ENCODE measurements at regions of chr15 and their contacts with region 1.

Region 1: DNA sequence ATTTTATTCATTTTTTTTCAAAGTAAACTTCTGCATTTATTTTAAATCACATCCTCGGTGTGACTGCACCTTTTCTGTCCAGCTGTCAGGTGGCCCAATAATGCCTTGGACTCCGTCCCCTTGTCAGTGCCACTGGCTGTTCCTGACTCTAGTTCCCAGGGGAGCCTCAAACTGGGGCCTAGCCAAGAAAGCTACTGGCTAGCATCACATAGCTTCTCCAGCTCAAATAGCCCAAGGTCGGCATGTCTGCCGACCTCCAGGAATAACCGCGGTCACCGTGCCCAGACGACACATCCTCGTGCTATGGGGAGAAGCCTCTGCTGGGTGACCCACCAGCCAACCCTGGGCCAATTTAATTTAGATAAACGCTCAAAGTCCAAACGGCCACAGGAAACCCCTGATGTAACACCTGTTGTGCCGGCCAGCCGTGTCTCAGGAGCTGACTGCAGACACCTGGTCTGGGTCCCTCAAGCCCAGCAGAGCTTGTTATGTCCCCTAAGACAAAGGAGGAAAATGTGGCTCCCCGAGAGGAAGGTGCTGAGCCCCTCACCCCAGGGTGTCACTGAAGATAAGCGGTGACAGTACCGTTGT is 126.1 kb downstream of the KLF13 start:
- DNase-seq: no peak
- H3K4me3 ChIP-seq: no peak overlapping the region
- H3K27ac ChIP-seq: no peak overlapping the region
- H3K27me3 ChIP-seq: no peaks in the 10 kb centered on the region
- CTCF ChIP-seq: no peak

Region 2: DNA sequence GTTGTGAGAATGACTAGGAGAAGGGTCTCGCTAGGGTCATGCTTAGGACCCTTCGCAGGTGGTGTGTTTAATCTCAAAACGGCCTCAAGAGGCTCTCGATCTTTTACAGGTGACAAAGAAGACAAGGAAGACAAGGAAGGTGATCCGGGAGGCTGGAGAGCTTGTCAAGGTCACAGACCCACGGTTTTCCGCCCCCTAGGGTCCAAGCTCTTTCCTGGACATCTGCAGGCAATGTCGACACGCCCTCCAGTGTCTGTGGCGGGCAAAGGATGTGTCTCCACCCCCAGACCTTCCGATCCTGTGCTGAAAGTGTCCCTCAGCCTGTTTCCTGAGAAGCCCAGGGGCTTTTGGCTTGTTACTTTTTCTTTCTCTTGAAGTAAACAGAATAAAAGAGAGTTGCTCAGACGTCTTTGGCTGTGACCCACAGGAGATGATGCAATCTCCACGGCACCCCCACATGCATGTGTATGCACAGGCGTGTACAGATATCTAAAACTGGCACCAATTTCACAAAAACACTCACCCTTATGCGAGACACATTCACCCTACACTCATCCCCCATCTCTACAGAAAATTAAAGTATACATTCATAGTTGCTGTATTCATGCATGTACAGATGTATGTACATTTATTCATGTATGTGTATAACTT is 17.3 kb before region 1 on chr15:
- CTCF ChIA-PET with region 1: interaction called, 14 read pairs
- POLR2A ChIA-PET with region 1: interaction called, 7 read pairs
- DNase-seq: peak; percentile 32
- H3K4me3 ChIP-seq: peak overlapping the region; percentile 25
- H3K27ac ChIP-seq: peak overlapping the region; percentile 87
- H3K27me3 ChIP-seq: no peaks in the 10 kb centered on the region
- CTCF ChIP-seq: peak; percentile 70

Region 3: GRCh38 chr15:31499953-31500765 is 47.5 kb after region 1 on chr15:
- CTCF ChIA-PET with region 1: no interaction called
- POLR2A ChIA-PET with region 1: no interaction called
- DNase-seq: no peak
- H3K4me3 ChIP-seq: no peak overlapping the region
- H3K27ac ChIP-seq: no peak overlapping the region
- H3K27me3 ChIP-seq: peaks cover 15% of the 10 kb centered on the region
- CTCF ChIP-seq: no peak